ENCODE measurements at regions of chr7 and their contacts with region 1.

Region 1: DNA sequence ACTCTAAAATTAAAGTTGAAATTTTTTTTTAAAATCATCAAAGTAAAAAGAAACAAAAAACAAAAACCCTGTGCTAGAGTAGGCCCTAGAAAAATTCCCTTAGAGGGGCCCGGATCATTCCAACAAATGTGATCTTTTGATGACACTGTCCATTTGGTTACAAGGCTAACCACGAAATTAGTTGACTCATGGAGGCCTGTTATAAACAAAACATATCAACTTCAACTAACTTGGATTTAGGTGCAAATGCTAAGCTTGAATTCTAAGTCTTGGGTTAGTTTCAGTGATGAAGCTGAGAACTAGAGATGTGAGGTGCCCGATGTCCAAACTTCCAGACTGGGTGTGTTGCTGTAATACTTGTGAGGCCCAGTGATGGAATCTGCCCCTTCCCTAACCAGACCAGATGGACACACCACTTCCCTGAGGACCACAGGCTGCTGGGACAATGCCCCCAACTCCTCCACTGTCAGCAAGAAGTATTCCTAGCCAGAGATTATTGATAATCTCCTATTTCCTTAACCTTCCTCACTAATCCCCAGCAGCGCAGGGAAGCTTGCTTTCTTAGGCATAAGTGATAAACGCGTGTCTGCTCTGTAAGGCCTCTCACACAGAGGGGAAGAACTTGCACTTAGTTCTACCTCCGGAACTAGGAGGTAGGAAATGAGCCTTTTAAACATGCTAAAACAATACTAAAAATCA is 108.7 kb downstream of the RAPGEF5 start:
- DNase-seq: no peak
- ATAC-seq: no peak
- H3K4me3 ChIP-seq: no peak overlapping the region
- H3K27ac ChIP-seq: no peak overlapping the region
- H3K4me1 ChIP-seq: no peaks in the 10 kb centered on the region
- H3K27me3 ChIP-seq: no peaks in the 10 kb centered on the region

Region 2: DNA sequence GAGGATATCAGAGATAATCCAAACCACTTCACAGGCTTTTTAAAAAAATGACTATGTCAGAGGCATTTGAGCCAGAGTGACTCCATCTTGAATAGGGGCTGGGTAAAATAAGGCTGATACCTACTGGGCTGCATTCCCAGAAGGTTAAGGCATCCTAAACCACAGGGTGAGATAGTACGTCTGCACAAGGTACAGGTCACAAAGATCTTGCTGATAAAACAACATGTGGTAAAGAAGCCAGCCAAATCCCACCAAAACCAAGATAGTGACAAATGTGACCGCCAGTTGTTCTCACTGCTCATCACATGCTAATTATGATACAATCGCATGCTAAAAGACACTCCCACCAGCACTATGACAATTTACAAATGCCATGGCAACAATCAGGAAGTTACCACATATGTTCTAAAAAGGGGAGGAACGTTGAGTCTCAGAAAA is 68.8 kb before region 1 on chr7:
- intact Hi-C with region 1: no loop called
- DNase-seq: no peak
- ATAC-seq: no peak
- H3K4me3 ChIP-seq: no peak overlapping the region
- H3K27ac ChIP-seq: no peak overlapping the region
- H3K4me1 ChIP-seq: no peaks in the 10 kb centered on the region
- H3K27me3 ChIP-seq: no peaks in the 10 kb centered on the region

Region 3: GRCh38 chr7:22193450-22193983 is 54.7 kb before region 1 on chr7:
- intact Hi-C with region 1: loop called in 1 of 2 experiments (anchors 5 kb)
- DNase-seq: peak; percentile 57 to 82
- ATAC-seq: peak; percentile 80
- H3K4me3 ChIP-seq: peak overlapping the region; percentile 43 to 45
- H3K27ac ChIP-seq: no peak overlapping the region
- H3K4me1 ChIP-seq: no peaks in the 10 kb centered on the region
- H3K27me3 ChIP-seq: no peaks in the 10 kb centered on the region